Thyroid gland (tissue), 4 donors: ENCODE measurements at regions of chr16 and their contacts with region 1.

Region 1: GRCh38 chr16:58102665-58103392 is 26.4 kb downstream of the CFAP20 start:
- DNase-seq: peak; percentile 40 to 53
- H3K4me3 ChIP-seq: no peak overlapping the region
- H3K27ac ChIP-seq: no peak overlapping the region
- H3K4me1 ChIP-seq: peaks cover 12% of the 10 kb centered on the region in 2 donors
- H3K27me3 ChIP-seq: no peaks in the 10 kb centered on the region
- CTCF ChIP-seq: no peak
- POLR2A ChIP-seq: no peak

Region 2: DNA sequence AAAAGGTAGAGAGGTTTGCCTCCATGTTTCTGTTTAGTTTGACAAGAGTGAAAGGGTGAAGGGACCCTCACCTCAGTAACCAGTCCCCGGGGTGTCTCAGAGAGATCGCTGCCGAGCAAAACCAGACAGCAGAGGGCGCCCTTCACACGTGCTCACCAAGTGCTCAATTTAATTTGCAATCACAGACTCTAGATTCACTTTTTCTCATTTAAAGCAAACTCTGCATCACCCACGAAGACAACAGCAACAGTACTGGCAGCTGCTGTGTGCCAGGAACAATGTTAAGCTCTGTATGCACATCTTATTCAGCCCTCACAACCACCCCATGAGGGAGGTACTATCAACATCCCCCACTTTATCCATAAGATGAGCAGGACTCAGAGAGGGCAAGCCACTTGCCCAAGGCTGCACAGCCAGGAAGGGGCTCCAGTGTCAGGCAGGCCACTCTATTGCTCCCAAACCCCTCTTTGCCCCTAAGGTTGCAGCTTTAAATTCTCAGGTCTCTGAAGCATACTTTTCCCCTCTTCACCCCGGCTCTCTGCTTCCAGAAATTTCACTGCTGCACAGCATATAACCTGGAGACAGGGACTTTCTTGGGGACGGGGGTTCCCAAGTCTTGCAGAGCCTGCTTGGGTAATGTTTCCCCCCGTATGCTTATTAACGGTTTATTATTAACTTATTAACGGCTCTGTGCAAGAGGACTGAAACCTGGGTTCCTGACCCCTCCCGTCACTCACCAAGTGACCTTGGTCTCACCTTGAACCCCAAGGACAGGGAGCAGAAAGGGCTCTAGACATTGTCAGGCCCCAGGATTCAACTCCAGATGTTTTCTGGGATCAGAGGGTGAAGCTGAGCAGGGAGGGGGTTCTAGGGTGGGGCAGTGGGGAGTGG is 202.8 kb before region 1 on chr16:
- intact Hi-C with region 1: loop called (anchors 10 kb)
- DNase-seq: peak; percentile 71 to 75
- H3K4me3 ChIP-seq: no peak overlapping the region
- H3K27ac ChIP-seq: no peak overlapping the region
- H3K4me1 ChIP-seq: peaks cover 8 to 9% of the 10 kb centered on the region in 2 donors
- H3K27me3 ChIP-seq: no peaks in the 10 kb centered on the region
- CTCF ChIP-seq: peak; percentile 60 to 90 (median 82)
- POLR2A ChIP-seq: no peak